Panc1 (cell line): ENCODE measurements at regions of chr11 and their contacts with region 1.

Region 1: DNA sequence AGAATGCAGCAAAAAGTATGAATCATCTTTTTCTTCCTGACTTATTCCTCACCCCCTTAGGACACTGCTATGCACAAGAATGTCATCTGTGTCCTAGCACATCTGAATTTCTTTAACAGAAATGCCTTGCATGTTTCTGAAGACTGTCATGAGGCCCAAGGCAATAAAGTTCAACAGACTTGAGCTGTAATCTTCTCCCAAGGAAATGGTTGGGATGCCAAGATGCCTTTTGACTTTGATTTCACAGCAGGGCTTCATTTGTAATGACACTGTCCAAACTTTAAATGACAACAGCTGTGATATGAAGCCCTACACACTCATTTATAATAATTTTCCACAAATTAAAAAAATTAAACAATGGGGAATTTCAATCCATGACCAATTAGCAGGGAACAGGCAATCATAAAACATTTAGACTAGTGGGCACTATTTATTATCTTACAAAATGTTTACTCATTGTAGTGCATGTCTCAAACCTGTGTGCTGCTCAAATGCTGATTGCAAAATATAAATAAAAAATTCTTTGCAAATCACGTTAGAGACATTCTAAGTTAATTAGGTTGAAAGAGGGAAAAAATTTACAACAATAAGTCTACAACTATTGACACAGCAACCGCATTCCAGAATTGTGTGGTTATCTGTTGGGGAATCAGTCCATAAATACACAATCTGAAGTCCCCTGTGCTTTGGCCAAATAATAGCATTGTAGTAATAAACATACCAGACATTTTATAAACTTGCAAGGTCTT is 242.3 kb downstream of the SWAP70 start:
- DNase-seq: peak; percentile 81
- ATAC-seq: peak; percentile 97
- H3K4me3 ChIP-seq: no peak overlapping the region; a peak in 1 of 4 replicates
- H3K27ac ChIP-seq: peak overlapping the region; percentile 100
- H3K4me1 ChIP-seq: peaks cover 29% of the 10 kb centered on the region
- H3K27me3 ChIP-seq: no peaks in the 10 kb centered on the region
- CTCF ChIP-seq: no peak

Region 2: GRCh38 chr11:9943386-9944110 is 37.3 kb after region 1 on chr11:
- CTCF ChIA-PET with region 1: no interaction called
- POLR2A ChIA-PET with region 1: no interaction called
- in situ Hi-C with region 1: no loop called
- intact Hi-C with region 1: no loop called
- DNase-seq: no peak
- ATAC-seq: no peak
- H3K4me3 ChIP-seq: no peak overlapping the region
- H3K27ac ChIP-seq: no peak overlapping the region; the same call in 1 of the 2 replicates
- H3K4me1 ChIP-seq: no peaks in the 10 kb centered on the region
- H3K27me3 ChIP-seq: no peaks in the 10 kb centered on the region
- CTCF ChIP-seq: no peak

Region 3: DNA sequence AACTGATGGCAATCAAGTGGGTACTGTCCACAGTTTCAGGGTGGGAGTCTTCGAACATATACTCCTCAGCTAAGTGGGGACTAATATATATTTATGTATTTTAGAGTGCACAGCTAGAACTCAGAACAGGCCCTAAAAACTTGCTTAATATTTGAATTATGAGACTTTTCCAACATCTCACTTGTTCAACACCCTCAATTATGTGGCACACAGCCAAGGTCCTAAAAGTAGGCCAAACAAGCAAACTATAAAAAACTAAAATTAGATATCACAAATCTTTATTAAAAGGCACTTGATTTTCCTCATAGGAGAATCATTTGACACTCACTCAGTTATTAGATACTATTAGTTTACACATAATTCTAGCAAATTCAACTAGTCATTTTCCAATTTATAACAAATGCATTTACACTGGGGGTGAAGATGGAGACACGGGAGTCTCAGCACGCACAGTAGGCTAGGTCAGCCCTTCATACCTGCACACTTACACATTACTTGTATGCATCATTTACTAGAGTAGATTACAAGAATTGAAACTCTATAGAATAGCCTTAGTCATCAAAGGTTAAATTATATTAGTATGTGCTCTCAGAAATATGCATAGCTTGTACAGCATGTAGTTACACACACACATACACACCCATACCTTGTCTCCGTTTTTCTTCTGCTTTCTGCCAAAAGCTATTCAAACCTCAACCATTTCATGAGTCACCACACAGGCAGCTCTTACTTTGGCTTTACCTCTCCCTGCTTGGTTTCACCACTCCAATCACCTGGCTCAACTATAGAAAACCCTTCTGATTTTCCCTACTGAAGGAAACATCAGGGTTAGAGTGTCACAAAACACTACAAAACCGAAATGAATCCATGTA is 216.3 kb after region 1 on chr11:
- CTCF ChIA-PET with region 1: no interaction called
- POLR2A ChIA-PET with region 1: interaction called, 12 read pairs
- in situ Hi-C with region 1: no loop called
- intact Hi-C with region 1: no loop called
- DNase-seq: no peak
- ATAC-seq: peak; percentile 84
- H3K4me3 ChIP-seq: peak overlapping the region; percentile 8 to 10; a peak in 3 of 4 replicates
- H3K27ac ChIP-seq: peak overlapping the region; percentile 84
- H3K4me1 ChIP-seq: peaks cover 38% of the 10 kb centered on the region
- H3K27me3 ChIP-seq: no peaks in the 10 kb centered on the region
- CTCF ChIP-seq: no peak